ENCODE measurements at regions of chr10 and their contacts with region 1.

Region 1: GRCh38 chr10:35822316-35822715 is 180.2 kb upstream of the FZD8 start:
- DNase-seq: peak; percentile 67 to 91
- H3K4me3 ChIP-seq: no peak overlapping the region
- H3K27ac ChIP-seq: peak overlapping the region; percentile 64 to 69
- H3K4me1 ChIP-seq: no peaks in the 10 kb centered on the region
- H3K27me3 ChIP-seq: no peaks in the 10 kb centered on the region
- CTCF ChIP-seq: peak; percentile 29 to 66 (median 46)
- POLR2A ChIP-seq: no peak

Region 2: GRCh38 chr10:35834877-35835494 is 12.7 kb after region 1 on chr10:
- intact Hi-C with region 1: loop called (anchors 1 kb)
- DNase-seq: no peak
- H3K4me3 ChIP-seq: no peak overlapping the region
- H3K27ac ChIP-seq: no peak overlapping the region
- H3K4me1 ChIP-seq: no peaks in the 10 kb centered on the region
- H3K27me3 ChIP-seq: no peaks in the 10 kb centered on the region
- CTCF ChIP-seq: no peak
- POLR2A ChIP-seq: no peak

Measured in breast epithelium (tissue), 4 donors.